ENCODE measurements at regions of chr5 and their contacts with region 1.

Region 1: GRCh38 chr5:72307968-72308852 is 11.8 kb downstream of the MRPS27 start:
- DNase-seq: peak; percentile 97 to 99
- H3K4me3 ChIP-seq: peak overlapping the region; percentile 66 to 72
- H3K27ac ChIP-seq: peak overlapping the region; percentile 95
- H3K4me1 ChIP-seq: peaks cover 0 to 40% (median 8%) of the 10 kb centered on the region in 4 donors
- H3K27me3 ChIP-seq: no peaks in the 10 kb centered on the region
- CTCF ChIP-seq: peak; percentile 89 to 93

Region 2: DNA sequence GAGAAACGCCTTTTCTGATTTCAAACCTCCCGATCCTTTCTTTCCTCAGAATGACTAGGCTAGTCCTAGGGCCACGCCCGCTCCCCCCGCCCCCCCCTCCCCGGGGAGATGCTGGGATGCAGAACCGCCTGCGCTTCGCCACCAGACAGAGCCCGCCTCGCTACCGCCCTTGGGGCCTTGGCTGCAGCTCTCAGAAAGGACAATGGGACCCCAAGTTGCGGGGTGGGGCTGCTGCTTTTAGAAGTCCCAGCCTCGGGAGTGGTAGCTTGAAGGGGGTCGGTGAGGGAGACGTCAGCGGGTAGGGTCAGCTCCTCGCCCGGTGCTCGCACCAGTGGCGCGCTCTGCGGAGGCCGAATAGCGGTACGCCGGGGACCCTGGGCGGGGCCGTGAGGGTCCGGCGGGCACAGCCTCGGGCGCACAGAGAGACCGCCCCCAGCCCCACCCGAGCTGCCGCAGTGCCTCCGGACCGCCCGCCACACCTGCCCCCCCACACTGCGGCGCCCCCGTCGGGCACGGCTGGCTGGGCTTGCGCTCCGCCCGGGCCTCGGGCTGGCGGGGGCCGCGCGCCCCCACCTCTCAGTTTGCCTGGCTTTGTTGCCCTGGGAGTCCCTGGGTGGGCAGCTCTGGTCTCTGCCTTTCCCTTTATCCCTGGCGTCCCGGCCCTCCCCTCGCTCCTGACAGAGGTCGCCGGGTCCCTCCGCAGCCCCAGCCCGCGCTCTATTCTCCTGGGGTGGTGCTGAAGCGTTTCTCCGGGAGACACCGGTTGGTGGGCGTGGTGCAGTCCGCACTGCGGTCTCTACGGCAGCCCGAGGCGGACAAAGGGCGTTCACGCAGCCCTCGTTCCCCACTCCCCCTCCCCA is 199.8 kb before region 1 on chr5:
- intact Hi-C with region 1: loop called (anchors 5 kb)
- DNase-seq: peak; percentile 86 to 96
- H3K4me3 ChIP-seq: peak overlapping the region; percentile 91 to 96
- H3K27ac ChIP-seq: peak overlapping the region; percentile 96 to 99
- H3K4me1 ChIP-seq: peaks cover 0 to 55% (median 21%) of the 10 kb centered on the region in 4 donors
- H3K27me3 ChIP-seq: no peaks in the 10 kb centered on the region
- CTCF ChIP-seq: no peak

Region 3: GRCh38 chr5:72141440-72142355 is 166.5 kb before region 1 on chr5:
- intact Hi-C with region 1: loop called (anchors 10 kb)
- DNase-seq: peak; percentile 38 to 80
- H3K4me3 ChIP-seq: no peak overlapping the region
- H3K27ac ChIP-seq: peak overlapping the region; percentile 82 to 87
- H3K4me1 ChIP-seq: peaks cover 0 to 99% (median 66%) of the 10 kb centered on the region in 4 donors
- H3K27me3 ChIP-seq: no peaks in the 10 kb centered on the region
- CTCF ChIP-seq: no peak

Measured in tibial artery (tissue), 4 donors.